Activated T-helper 2 cell treated with anti-CD3 and anti-CD28 coated beads, Interferon-gamma antibody, Interleukin-2, Interleukin-4, amounts not matched to agents 10 μg/mL and 5 μg/mL and 100 μg/mL, durations not matched to agents 14 hours and 24 hours and 36 hours (primary cell): ENCODE measurements at regions of chr2 and their contacts with region 1.

Region 1: GRCh38 chr2:143696651-143697050 is 567.4 kb downstream of the ARHGAP15 start:
- DNase-seq: no peak
- H3K4me3 Mint-ChIP-seq: no peak overlapping the region
- H3K27ac Mint-ChIP-seq: no peak overlapping the region
- H3K4me1 Mint-ChIP-seq: peaks cover 13% of the 10 kb centered on the region
- H3K27me3 Mint-ChIP-seq: no peaks in the 10 kb centered on the region

Region 2: GRCh38 chr2:143397884-143398614 is 298.6 kb before region 1 on chr2:
- intact Hi-C with region 1: loop called (anchors 10 kb)
- DNase-seq: no peak
- H3K4me3 Mint-ChIP-seq: no peak overlapping the region
- H3K27ac Mint-ChIP-seq: no peak overlapping the region
- H3K4me1 Mint-ChIP-seq: peaks cover 17% of the 10 kb centered on the region
- H3K27me3 Mint-ChIP-seq: no peaks in the 10 kb centered on the region

Region 3: DNA sequence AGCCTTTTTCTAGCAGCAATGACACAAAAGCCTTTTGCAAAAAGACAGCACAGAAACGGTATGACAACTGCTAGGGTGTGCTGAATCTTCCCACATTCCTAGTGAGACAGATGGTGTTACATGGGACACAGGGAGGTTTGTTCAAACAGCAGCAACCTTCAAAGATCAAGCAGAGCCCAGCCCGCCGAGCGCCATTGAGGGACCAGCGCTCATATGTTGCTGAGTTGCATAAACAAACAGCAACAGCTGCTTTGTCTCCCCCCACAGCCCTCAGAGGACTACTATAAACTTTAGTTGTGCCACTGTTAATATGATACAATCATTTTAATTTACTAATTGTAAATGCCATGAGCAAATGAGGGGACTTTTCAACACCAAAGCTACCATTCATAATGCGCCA is 705.6 kb after region 1 on chr2:
- intact Hi-C with region 1: no loop called
- DNase-seq: no peak
- H3K4me3 Mint-ChIP-seq: no peak overlapping the region
- H3K27ac Mint-ChIP-seq: no peak overlapping the region
- H3K4me1 Mint-ChIP-seq: peaks cover 18% of the 10 kb centered on the region
- H3K27me3 Mint-ChIP-seq: no peaks in the 10 kb centered on the region